Ascending aorta (tissue), 2 donors: ENCODE measurements at regions of chr7 and their contacts with region 1.

Region 1: DNA sequence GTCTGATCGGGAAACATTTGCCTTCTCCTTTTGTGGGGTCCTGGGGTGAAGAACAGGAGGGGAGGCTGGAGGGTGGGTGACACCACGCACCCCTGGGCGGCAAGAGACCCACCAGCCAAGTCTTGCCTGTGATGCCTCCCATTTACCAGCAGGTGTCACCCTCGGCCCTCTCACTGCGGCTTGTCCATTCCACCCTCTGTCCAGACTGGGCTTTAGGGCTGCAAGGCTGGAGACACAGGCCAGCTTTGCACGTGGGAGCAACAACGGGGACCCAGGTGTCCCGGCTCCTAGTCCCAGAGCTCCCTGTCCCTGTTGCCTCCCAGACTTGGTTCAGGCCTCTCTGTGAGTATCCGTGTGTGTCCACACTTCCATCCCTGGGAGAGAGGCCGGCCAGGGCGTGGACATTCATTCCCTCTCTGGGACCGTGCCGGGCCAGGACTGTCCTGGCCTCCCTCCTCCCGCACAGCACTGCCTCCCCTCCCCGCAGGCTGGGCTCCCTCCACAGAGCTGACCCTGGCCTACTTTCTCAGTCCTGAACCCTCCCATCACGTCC is 36.2 kb upstream of the GTF2IRD1 start:
- DNase-seq: peak in 1 of 2 donors; percentile 76
- H3K4me3 ChIP-seq: no peak overlapping the region
- H3K27ac ChIP-seq: no peak overlapping the region
- H3K4me1 ChIP-seq: no peaks in the 10 kb centered on the region
- H3K27me3 ChIP-seq: no peaks in the 10 kb centered on the region
- CTCF ChIP-seq: peak; percentile 97 to 98 (median 98)

Region 2: DNA sequence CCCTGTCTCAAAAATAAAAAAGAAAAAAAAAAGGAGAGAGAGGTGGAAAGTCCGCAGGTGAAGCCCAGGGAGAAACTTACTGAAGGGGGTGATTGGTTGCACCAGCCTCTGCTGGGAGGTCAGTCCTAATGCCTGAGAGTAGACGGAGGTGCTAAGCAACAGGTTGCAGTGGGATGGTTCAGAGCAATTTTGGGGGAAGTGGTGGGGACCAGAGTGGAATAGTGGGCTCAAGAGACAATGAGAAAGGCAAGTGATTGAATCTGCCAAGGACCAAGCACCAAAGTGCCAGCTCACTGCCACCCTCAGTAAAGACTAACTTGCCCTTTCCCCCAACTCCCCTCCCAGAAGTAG is 149.8 kb after region 1 on chr7:
- intact Hi-C with region 1: loop called (anchors 2 kb)
- DNase-seq: no peak
- H3K4me3 ChIP-seq: no peak overlapping the region
- H3K27ac ChIP-seq: no peak overlapping the region
- H3K4me1 ChIP-seq: no peaks in the 10 kb centered on the region
- H3K27me3 ChIP-seq: no peaks in the 10 kb centered on the region
- CTCF ChIP-seq: no peak

Region 3: GRCh38 chr7:74709880-74710671 is 292.6 kb after region 1 on chr7:
- intact Hi-C with region 1: loop called (anchors 10 kb)
- DNase-seq: no peak
- H3K4me3 ChIP-seq: no peak overlapping the region
- H3K27ac ChIP-seq: no peak overlapping the region
- H3K4me1 ChIP-seq: no peaks in the 10 kb centered on the region
- H3K27me3 ChIP-seq: no peaks in the 10 kb centered on the region
- CTCF ChIP-seq: no peak

Region 4: DNA sequence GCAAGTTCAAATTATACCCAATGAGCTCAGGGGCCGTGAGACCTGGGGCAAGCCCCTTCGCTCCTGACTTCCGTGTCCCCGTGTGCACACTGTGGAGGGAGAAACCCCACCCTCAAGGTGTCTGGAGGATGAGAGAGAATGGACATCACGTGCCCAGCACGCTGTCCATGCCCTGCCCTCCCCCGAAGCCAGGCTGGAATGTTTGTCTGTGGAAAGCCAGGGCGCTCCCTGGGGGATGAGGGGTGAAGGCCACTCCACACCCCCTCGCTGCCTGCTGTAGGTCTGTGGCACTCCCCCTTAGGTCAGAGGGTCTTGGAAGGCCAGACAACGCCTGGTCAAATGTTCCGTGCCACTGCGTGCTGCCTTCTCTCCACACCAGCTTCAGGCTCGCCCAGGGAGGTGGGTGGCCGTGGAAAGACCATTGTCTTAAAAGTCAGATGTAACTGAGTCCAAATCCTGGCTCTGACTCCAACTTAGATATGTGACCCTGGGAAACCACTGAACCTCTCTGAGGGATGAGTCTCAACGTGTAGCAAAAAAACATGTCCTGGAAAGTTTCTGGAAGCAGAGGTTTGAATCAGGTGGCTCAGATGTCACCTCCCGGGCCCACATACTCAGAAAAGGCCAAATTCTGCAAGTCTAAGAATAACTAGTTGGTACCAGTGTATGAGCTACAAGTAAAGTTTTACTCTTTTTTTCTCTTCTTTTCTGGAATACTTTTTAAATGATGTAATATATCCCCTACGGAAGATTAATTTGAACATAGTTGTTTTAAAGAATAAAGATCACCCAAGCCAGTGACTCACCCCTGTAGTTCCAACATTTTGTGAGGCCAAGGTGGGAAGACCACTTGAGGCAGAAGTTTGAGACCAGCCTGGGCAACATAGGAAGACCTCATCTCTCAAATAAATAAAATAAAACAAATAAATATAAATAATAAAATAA is 631.2 kb after region 1 on chr7:
- intact Hi-C with region 1: loop called (anchors 5 kb)
- DNase-seq: no peak
- H3K4me3 ChIP-seq: no peak overlapping the region
- H3K27ac ChIP-seq: peak overlapping the region; percentile 68 to 78
- H3K4me1 ChIP-seq: peaks cover 8 to 25% of the 10 kb centered on the region in 2 donors
- H3K27me3 ChIP-seq: no peaks in the 10 kb centered on the region
- CTCF ChIP-seq: no peak